Panc1 (cell line): ENCODE measurements at regions of chr1 and their contacts with region 1.

Region 1: DNA sequence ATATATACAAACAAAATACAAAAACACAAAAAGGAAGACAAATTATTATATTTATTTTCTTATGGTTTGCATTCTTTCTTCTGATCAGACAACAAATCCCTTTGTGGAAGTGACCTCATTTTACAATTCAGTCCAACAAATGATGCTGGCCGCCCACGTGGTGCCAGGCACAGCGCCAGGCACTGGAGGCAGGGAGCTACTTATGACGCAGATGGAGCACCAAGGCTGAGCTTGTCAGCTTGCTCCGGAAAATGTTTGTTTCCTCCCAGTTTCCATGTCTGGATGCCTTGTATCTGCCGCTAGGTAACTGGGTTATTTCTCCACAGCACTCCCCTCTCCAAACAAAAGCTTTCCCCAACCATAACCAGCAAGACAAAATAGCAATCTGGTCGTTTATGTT is 30.7 kb upstream of the CD34 start:
- DNase-seq: no peak
- ATAC-seq: no peak; the same call in 1 of the 2 replicates
- H3K4me3 ChIP-seq: no peak overlapping the region
- H3K27ac ChIP-seq: no peak overlapping the region
- H3K4me1 ChIP-seq: no peaks in the 10 kb centered on the region
- H3K27me3 ChIP-seq: no peaks in the 10 kb centered on the region
- CTCF ChIP-seq: no peak

Region 2: GRCh38 chr1:207918011-207918410 is 23.7 kb before region 1 on chr1:
- CTCF ChIA-PET with region 1: interaction called, 12 read pairs
- POLR2A ChIA-PET with region 1: no interaction called
- in situ Hi-C with region 1: no loop called
- intact Hi-C with region 1: no loop called
- DNase-seq: no peak
- ATAC-seq: no peak
- H3K4me3 ChIP-seq: no peak overlapping the region
- H3K27ac ChIP-seq: no peak overlapping the region
- H3K4me1 ChIP-seq: no peaks in the 10 kb centered on the region
- H3K27me3 ChIP-seq: peaks cover 5% of the 10 kb centered on the region
- CTCF ChIP-seq: no peak

Region 3: GRCh38 chr1:207968521-207969009 is 26.9 kb after region 1 on chr1:
- CTCF ChIA-PET with region 1: no interaction called
- POLR2A ChIA-PET with region 1: no interaction called
- in situ Hi-C with region 1: no loop called
- intact Hi-C with region 1: no loop called
- DNase-seq: no peak
- ATAC-seq: no peak
- H3K4me3 ChIP-seq: no peak overlapping the region
- H3K27ac ChIP-seq: no peak overlapping the region
- H3K4me1 ChIP-seq: no peaks in the 10 kb centered on the region
- H3K27me3 ChIP-seq: no peaks in the 10 kb centered on the region; the same call in 1 of the 2 replicates
- CTCF ChIP-seq: no peak

Region 4: DNA sequence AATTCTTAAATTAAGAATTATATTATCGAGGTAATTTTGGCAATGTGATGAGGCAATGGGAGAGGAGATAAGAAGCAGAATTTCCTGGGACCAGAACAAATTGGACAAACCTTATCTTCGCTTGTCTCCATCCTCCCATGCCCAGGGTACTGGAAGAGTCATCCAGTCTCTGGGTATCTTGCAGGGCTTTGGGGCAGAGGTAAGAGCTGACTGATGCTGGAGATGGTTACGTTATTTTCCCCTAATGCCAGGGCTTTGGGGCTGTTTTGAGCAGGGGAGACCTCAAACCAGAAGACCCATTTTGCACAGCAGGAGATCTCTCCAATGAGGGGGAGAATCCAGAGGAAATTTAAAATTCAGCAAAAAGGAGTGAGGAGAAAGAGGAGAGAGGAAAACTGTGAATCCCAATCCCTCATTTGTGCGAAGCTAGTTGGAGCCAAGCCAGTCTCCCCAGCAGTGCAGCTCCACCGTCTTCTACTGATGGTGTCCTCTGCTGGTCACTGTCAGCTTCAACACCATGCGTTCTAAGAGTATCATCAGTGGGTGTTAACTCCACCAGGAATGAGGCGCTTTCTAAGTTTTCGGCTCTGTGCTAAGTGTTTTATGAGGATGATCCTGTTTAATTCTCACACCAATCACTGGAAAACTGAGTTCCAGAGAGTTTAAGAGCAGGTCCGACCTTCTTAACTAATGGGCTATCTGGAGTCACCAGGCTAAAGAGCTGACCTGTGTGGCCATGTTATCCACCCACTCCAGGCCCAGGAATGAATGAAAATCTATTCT is 56.0 kb after region 1 on chr1:
- CTCF ChIA-PET with region 1: no interaction called
- POLR2A ChIA-PET with region 1: no interaction called
- in situ Hi-C with region 1: no loop called
- intact Hi-C with region 1: no loop called
- DNase-seq: peak; percentile 36
- ATAC-seq: peak; percentile 90
- H3K4me3 ChIP-seq: no peak overlapping the region
- H3K27ac ChIP-seq: no peak overlapping the region
- H3K4me1 ChIP-seq: no peaks in the 10 kb centered on the region
- H3K27me3 ChIP-seq: no peaks in the 10 kb centered on the region; the same call in none of the 2 replicates
- CTCF ChIP-seq: peak; percentile 90